ENCODE measurements at regions of chr1 and their contacts with region 1.

Region 1: DNA sequence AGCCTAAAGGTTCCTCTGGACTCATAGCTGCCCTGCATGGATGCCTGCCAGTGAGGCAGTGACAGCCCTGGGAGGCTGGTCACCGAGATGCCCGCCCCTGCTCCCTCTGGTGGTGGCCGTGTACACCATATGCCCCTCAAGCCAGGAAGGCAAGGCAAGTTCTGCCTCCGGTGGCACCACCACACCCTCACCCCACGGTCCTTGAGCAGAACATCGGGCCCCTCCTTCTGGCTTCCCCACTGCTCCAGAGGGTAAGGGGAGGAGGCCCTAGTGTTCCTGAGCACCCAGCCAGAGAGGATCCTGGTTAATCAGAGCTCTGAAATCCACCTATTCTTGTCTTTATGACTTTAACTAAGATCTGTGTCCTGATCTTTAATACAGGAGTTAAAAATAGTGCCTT is 1.6 kb upstream of the S100A14 start:
- DNase-seq: peak; percentile 86
- H3K4me3 Mint-ChIP-seq: peak overlapping the region; percentile 90
- H3K27ac Mint-ChIP-seq: peak overlapping the region; percentile 76
- H3K4me1 Mint-ChIP-seq: peaks cover 47% of the 10 kb centered on the region
- H3K27me3 Mint-ChIP-seq: no peaks in the 10 kb centered on the region
- CTCF ChIP-seq: peak; percentile 90

Region 2: DNA sequence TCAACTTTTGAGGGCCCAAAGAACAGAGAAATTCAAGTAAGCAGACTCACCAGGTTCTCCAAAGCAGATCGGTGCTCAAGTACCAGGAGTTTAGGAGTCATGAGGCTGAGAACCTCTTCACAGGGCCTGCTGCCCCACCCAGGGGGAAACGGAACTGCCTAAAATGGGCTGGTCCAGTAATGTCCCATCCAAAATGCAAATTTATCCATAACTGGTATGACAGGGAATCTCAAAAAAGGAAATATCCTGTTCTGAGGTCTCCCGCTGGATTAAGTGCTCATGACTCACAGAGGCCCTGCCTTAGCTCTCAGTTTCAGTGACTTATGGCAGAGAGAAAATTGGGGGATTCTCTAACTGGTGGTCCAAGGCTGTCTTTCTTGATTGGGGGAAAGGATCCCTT is 476.3 kb before region 1 on chr1:
- CTCF ChIA-PET with region 1: no interaction called
- POLR2A ChIA-PET with region 1: no interaction called
- intact Hi-C with region 1: no loop called
- DNase-seq: no peak
- H3K4me3 Mint-ChIP-seq: no peak overlapping the region
- H3K27ac Mint-ChIP-seq: no peak overlapping the region
- H3K4me1 Mint-ChIP-seq: no peaks in the 10 kb centered on the region
- H3K27me3 Mint-ChIP-seq: no peaks in the 10 kb centered on the region
- CTCF ChIP-seq: no peak

Region 3: DNA sequence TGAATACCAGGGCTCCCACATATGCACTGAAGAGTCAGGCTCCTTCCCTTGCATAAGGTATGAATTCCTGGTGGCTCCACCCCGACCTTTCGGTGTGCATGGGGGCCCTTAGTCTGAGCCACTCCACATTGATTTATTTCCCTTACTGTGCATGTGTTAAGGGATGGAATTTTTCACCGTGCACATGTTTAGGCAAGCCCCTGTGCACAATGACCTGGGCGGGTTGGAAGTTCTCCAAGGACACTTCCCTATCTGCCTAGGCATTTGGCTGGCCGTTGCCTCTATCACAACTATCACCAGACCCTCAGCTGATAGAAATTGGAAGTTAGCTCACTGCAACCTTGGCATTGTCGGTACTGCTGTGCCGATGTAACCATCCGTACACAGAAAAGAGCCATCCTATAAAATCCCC is 91.5 kb before region 1 on chr1:
- CTCF ChIA-PET with region 1: interaction called, 4 read pairs
- POLR2A ChIA-PET with region 1: interaction called, 153 read pairs
- intact Hi-C with region 1: no loop called
- DNase-seq: peak; percentile 94
- H3K4me3 Mint-ChIP-seq: peak overlapping the region; percentile 29
- H3K27ac Mint-ChIP-seq: peak overlapping the region; percentile 85
- H3K4me1 Mint-ChIP-seq: peaks cover 38% of the 10 kb centered on the region
- H3K27me3 Mint-ChIP-seq: no peaks in the 10 kb centered on the region
- CTCF ChIP-seq: no peak

Region 4: DNA sequence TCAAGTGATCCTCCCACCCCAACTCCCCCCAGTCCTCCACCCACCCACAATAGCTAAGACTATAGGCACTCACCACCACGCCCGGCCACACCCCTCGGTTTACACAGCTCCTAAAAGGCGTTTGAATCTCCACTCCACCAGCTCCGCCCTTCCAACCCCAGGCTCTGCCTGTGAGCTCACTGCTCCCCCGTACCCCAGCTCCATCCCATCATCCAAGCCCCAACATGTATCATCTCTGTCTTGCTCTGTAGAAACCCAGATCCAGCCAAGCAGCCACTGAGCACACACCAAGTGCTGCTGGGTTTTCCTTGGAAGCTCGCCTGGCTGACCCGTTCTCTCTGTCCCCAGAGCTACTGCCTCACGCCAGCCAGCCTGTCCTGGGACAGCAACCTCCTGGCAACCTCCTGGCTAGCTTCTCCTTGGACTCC is 40.0 kb before region 1 on chr1:
- CTCF ChIA-PET with region 1: interaction called, 214 read pairs
- POLR2A ChIA-PET with region 1: interaction called, 280 read pairs
- intact Hi-C with region 1: loop called (anchors 1 kb)
- DNase-seq: no peak
- H3K4me3 Mint-ChIP-seq: no peak overlapping the region
- H3K27ac Mint-ChIP-seq: no peak overlapping the region
- H3K4me1 Mint-ChIP-seq: peaks cover 25% of the 10 kb centered on the region
- H3K27me3 Mint-ChIP-seq: no peaks in the 10 kb centered on the region
- CTCF ChIP-seq: no peak

Region 5: GRCh38 chr1:153658400-153659174 is 40.9 kb after region 1 on chr1 and contains the start of gene SNAPIN:
- CTCF ChIA-PET with region 1: interaction called, 6 read pairs
- POLR2A ChIA-PET with region 1: interaction called, 1,272 read pairs
- intact Hi-C with region 1: no loop called
- DNase-seq: peak; percentile 95
- H3K4me3 Mint-ChIP-seq: peak within 1 kb of the TSS; percentile 92
- H3K27ac Mint-ChIP-seq: peak within 1 kb of the TSS; percentile 91
- H3K4me1 Mint-ChIP-seq: peaks cover 5% of the 10 kb centered on the region
- H3K27me3 Mint-ChIP-seq: no peaks in the 10 kb centered on the region
- CTCF ChIP-seq: no peak
- total RNA-seq, gene SNAPIN: 55.9 and 63.7 TPM in 2 replicates